Sciatic nerve (tissue), 2 donors: ENCODE measurements at regions of chr2 and their contacts with region 1.

Region 1: DNA sequence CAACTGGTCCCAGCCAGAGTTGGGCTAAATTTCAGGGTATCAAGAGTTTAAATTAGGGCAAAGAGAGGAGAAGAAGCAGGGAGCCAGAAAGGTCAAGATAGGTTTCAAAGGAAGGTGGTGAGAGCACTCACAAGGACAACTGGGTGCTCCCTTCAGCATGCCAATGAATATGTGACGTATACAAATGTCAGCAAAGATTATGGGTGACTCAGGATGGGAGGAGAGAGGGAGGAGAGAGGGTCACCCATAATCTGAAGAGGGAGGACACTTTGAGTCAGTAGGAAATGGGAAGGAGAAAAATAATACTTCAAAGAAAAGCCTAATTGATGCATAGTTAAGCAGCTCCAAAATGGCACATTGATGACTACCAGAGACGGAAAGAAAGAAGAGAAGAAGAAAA is 53.1 kb upstream of the ABCA12 start:
- DNase-seq: no peak
- ATAC-seq: no peak

Region 2: DNA sequence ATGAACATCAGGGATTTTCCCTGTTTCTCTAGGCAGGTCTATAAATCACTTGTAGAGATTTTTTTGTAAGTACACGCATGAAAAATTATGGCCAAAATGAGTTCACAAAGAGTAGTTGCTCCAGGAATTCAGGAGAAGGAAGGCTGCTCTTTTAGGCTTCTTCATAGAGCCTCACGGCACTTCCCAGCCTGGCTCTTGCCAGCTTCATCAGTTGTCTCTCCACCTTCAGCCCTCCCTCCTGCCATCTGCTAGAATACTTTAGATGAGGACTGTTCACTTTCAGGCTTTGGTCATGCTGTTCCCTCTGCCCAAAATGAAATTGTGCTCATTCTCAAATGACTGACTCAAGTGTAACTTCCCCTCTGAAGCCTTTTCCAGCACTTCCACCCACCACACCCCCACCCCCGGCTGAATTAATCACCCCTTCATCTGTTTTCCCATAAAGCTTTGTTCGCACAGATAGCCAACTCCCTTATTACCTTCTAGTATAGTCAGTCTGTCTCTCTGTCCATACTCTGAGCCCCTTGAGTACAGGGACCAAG is 51.2 kb before region 1 on chr2:
- intact Hi-C with region 1: loop called (anchors 5 kb)
- DNase-seq: no peak
- ATAC-seq: no peak

Region 3: GRCh38 chr2:215161301-215161829 is 30.1 kb before region 1 on chr2:
- intact Hi-C with region 1: no loop called
- DNase-seq: no peak
- ATAC-seq: no peak

Region 4: GRCh38 chr2:215784371-215784783 is 592.9 kb after region 1 on chr2:
- intact Hi-C with region 1: no loop called
- DNase-seq: no peak
- ATAC-seq: peak; percentile 12